ENCODE measurements at regions of chr12 and their contacts with region 1.

Region 1: GRCh38 chr12:89098441-89099112 is 253.7 kb downstream of the DUSP6 start:
- DNase-seq: peak in 1 of 3 donors; percentile 39
- ATAC-seq: no peak
- H3K4me3 ChIP-seq: no peak overlapping the region
- H3K4me1 ChIP-seq: no peaks in the 10 kb centered on the region
- CTCF ChIP-seq: no peak

Region 2: GRCh38 chr12:88241862-88242570 is 856.6 kb before region 1 on chr12:
- intact Hi-C with region 1: no loop called
- DNase-seq: peak in 1 of 3 donors; percentile 8
- ATAC-seq: peak; percentile 25
- H3K4me3 ChIP-seq: no peak overlapping the region
- H3K4me1 ChIP-seq: no peaks in the 10 kb centered on the region
- CTCF ChIP-seq: no peak

Region 3: GRCh38 chr12:89073027-89073398 is 25.6 kb before region 1 on chr12:
- intact Hi-C with region 1: loop called in 1 of 2 experiments (anchors 2 kb)
- DNase-seq: no peak
- ATAC-seq: no peak
- H3K4me3 ChIP-seq: no peak overlapping the region
- H3K4me1 ChIP-seq: no peaks in the 10 kb centered on the region
- CTCF ChIP-seq: no peak

Region 4: DNA sequence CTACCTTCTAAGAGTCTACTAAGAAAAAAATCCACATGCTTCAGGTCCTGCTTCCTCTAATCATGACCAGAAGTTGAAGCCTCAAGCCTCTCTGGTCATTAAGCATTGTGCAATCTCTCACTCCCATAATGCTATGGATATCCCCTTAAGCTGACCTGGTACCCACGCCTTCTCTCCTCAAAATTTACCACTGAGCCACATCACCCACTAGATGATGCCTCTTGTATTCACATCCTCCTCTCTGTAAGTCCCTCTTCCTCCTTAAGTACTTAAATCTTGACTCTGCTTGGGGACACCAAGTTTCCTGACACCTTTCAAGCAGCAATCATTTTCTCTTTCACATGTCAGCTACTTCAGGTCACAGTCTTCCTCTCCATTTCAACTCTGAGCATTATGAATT is 416.2 kb after region 1 on chr12:
- intact Hi-C with region 1: no loop called
- DNase-seq: no peak
- ATAC-seq: no peak
- H3K4me3 ChIP-seq: no peak overlapping the region
- H3K4me1 ChIP-seq: peaks cover 6% of the 10 kb centered on the region
- CTCF ChIP-seq: no peak

Measured in mucosa of descending colon (tissue), 3 donors.